ENCODE measurements at regions of chr6 and their contacts with region 1.

Region 1: GRCh38 chr6:73722318-73723060 is 26.5 kb downstream of the CD109 start:
- DNase-seq: peak in 2 of 14 experiments; percentile 45 to 61
- ATAC-seq: no peak
- H3K4me3 ChIP-seq: no peak overlapping the region
- H3K4me3 Mint-ChIP-seq: no peak overlapping the region
- H3K27ac ChIP-seq: no peak overlapping the region
- H3K27ac Mint-ChIP-seq: no peak overlapping the region
- H3K4me1 ChIP-seq: peaks cover 2% of the 10 kb centered on the region
- H3K4me1 Mint-ChIP-seq: peaks cover 12% of the 10 kb centered on the region
- H3K27me3 ChIP-seq: no peaks in the 10 kb centered on the region
- H3K27me3 Mint-ChIP-seq: no peaks in the 10 kb centered on the region
- CTCF ChIP-seq: no peak

Region 2: DNA sequence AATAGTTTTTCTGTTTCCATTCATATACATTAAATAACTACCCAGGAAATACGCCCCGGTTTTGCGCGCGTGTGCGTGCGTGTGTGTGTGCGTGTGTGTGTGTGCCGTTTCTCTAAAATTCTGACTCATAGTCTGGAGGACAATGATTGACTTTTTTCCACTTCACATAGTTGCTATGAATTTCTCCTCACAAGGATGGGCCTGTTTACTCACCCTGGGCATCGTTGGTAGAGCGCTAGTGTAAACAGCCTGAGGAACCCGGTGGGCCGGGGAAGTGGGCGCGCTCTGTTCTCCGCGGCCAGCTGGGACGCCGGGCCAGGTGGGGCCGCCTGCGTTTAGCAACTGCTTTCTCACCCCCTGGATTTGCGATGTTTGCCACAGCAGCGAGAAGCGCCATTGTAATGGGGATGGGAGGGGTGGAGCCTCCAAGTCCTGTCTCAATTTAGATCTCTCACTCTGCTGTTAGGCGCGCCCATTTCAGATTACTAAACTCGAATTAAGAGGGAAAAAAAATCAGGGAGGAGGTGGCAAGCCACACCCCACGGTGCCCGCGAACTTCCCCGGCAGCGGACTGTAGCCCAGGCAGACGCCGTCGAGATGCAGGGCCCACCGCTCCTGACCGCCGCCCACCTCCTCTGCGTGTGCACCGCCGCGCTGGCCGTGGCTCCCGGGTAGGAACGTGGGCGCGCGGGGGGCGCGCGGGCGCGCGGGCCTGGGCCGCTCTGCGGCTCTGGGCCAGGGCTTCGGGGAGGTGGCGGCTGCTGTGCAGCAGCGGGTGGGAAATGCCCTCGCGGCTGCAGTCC is 26.7 kb before region 1 on chr6 and contains the start of gene CD109:
- CTCF ChIA-PET with region 1: no interaction called
- POLR2A ChIA-PET with region 1: no interaction called
- intact Hi-C with region 1: loop called in 1 of 2 experiments (anchors 1 kb)
- DNase-seq: peak in 13 of 14 experiments; percentile 9 to 74 (median 44)
- ATAC-seq: peak; percentile 78
- H3K4me3 ChIP-seq: peak within 1 kb of the TSS; percentile 58
- H3K4me3 Mint-ChIP-seq: peak within 1 kb of the TSS; percentile 87
- H3K27ac ChIP-seq: no peak within 1 kb of the TSS
- H3K27ac Mint-ChIP-seq: peak within 1 kb of the TSS; percentile 82
- H3K4me1 ChIP-seq: peaks cover 14% of the 10 kb centered on the region
- H3K4me1 Mint-ChIP-seq: peaks cover 19% of the 10 kb centered on the region
- H3K27me3 ChIP-seq: peaks cover 0 to 3% of the 10 kb centered on the region in 2 experiments
- H3K27me3 Mint-ChIP-seq: peaks cover 30% of the 10 kb centered on the region
- CTCF ChIP-seq: no peak
- total RNA-seq, gene CD109: 0.75 to 0.80 TPM